Heart left ventricle (tissue), 16 donors: ENCODE measurements at regions of chr2 and their contacts with region 1.

Region 1: DNA sequence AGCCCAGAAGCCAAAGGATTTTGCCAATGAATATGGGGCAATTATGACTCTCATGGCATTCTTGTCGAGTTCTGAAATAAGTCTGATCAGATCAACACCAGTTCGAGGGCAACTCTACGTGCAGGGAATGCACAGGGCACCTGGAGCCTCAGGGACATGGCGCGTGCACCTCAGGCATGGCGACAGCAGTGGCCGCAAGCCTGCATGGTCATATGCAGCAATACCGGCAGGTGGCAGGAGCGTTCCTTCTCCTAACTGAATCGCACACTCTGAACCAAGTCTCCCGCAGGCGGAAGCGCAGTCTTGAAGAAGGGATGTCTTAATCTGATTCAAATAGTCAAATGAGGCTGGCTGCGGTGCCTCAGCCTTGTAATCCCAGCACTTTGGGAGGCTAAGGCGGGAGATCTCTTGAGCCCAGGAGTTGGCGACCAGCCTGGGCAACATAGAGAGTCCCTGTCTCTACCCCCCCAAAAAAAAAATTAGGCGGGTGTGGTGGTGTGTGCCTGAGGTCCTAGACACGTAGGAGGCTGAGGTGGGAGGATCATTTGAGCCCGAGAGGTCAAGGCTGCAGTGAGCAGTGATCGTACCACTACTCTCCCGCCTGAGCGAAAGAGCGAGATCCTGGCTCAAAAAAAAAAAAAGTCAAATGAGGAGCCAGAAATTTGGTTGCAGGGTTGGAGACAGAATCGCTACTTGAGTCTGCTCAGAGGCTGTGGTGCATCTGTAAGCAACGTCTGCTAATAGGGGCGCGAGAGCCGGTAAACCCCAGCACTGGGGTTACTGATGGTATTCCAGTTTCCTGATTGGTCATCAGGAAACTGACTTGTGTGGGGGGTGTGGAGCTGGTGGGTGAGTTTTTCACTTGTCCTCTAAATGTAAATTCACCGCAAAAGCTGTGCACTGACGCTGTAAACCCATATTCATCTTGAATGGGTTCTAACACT is 28.8 kb downstream of the FHL2 start:
- DNase-seq: peak; percentile 82 to 89 (median 85)
- ATAC-seq: peak; percentile 7 to 48 (median 24)
- H3K4me3 ChIP-seq: no peak overlapping the region
- H3K27ac ChIP-seq: peak overlapping the region in 10 of 12 donors; percentile 5 to 94 (median 46)
- H3K4me1 ChIP-seq: peaks cover 0 to 80% (median 43%) of the 10 kb centered on the region in 12 donors
- H3K27me3 ChIP-seq: no peaks in the 10 kb centered on the region
- CTCF ChIP-seq: peak; percentile 67 to 91 (median 84)
- POLR2A ChIP-seq: peak in 1 of 2 donors; percentile 40

Region 2: GRCh38 chr2:105187531-105187930 is 182.5 kb before region 1 on chr2:
- intact Hi-C with region 1: no loop called
- DNase-seq: no peak
- ATAC-seq: no peak
- H3K4me3 ChIP-seq: no peak overlapping the region
- H3K27ac ChIP-seq: no peak overlapping the region
- H3K4me1 ChIP-seq: no peaks in the 10 kb centered on the region
- H3K27me3 ChIP-seq: peaks cover 0 to 18% (median 4%) of the 10 kb centered on the region in 9 donors
- CTCF ChIP-seq: no peak
- POLR2A ChIP-seq: no peak

Region 3: DNA sequence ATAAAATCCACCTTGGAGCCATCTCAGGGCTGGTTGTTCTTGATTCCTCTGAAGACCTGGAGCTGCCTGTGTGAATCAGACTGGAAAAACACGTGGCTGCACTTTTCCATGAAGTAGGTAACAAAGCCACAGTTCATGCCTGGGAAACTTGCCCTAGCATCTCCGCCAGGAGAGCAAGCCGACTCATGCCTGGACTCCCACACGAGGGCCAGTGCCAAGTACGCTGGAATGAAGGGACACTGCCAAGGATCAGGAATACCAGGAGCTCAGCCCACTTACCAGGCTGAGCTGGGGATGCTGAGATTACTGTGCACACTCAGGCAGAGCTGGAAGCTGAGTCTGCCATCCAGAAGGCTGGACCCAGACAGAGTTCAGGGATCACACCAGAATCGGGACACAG is 39.7 kb after region 1 on chr2:
- intact Hi-C with region 1: loop called in 1 of 10 experiments (anchors 5 kb)
- DNase-seq: peak; percentile 79 to 87 (median 84)
- ATAC-seq: peak; percentile 33 to 79 (median 62)
- H3K4me3 ChIP-seq: no peak overlapping the region
- H3K27ac ChIP-seq: peak overlapping the region in 11 of 12 donors; percentile 46 to 81 (median 60)
- H3K4me1 ChIP-seq: peaks cover 4 to 93% (median 38%) of the 10 kb centered on the region in 12 donors
- H3K27me3 ChIP-seq: no peaks in the 10 kb centered on the region
- CTCF ChIP-seq: no peak
- POLR2A ChIP-seq: peak in 1 of 2 donors; percentile 28

Region 4: DNA sequence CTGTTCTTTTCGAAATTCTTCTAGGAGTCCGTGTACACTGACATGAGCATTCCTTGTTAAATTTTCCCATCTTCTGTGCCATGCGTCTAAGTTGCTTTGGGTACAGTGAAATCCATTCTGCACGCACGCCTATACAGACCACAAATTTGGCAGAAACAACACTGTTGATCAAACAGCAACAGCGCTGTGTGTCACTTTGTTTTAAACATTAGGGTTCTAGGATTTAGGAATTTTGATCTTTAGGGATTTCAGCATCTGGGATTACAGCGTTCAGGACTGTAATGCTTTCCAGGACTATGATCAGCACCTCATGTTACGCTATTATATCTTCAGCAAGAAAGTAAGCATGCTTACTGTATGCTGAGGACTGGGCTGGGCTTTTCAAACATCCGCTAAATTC is 76.0 kb after region 1 on chr2:
- intact Hi-C with region 1: no loop called
- DNase-seq: no peak
- ATAC-seq: no peak
- H3K4me3 ChIP-seq: no peak overlapping the region
- H3K27ac ChIP-seq: no peak overlapping the region
- H3K4me1 ChIP-seq: peaks cover 0 to 14% (median 0%) of the 10 kb centered on the region in 12 donors
- H3K27me3 ChIP-seq: no peaks in the 10 kb centered on the region
- CTCF ChIP-seq: no peak
- POLR2A ChIP-seq: no peak

Region 5: GRCh38 chr2:105521205-105521604 is 151.2 kb after region 1 on chr2:
- intact Hi-C with region 1: loop called (anchors 1 to 5 kb)
- DNase-seq: no peak
- ATAC-seq: no peak
- H3K4me3 ChIP-seq: no peak overlapping the region
- H3K27ac ChIP-seq: peak overlapping the region in 6 of 12 donors; percentile 28 to 89 (median 42)
- H3K4me1 ChIP-seq: peaks cover 0 to 39% (median 19%) of the 10 kb centered on the region in 12 donors
- H3K27me3 ChIP-seq: no peaks in the 10 kb centered on the region
- CTCF ChIP-seq: peak; percentile 44 to 74 (median 64)
- POLR2A ChIP-seq: no peak